ENCODE measurements at regions of chr2 and their contacts with region 1.

Region 1: GRCh38 chr2:37168217-37168981 is 11.6 kb upstream of the EIF2AK2 start:
- DNase-seq: peak; percentile 60 to 78
- ATAC-seq: peak; percentile 89 to 97
- H3K4me3 ChIP-seq: no peak overlapping the region
- H3K27ac ChIP-seq: peak overlapping the region; percentile 44 to 75
- H3K4me1 ChIP-seq: peaks cover 10% of the 10 kb centered on the region; the same call in 1 of the 3 replicates
- CTCF ChIP-seq: peak; percentile 81
- EP300 ChIP-seq: no peak
- POLR2A ChIP-seq: no peak
- RAD21 ChIP-seq: peak; percentile 72 to 83

Region 2: DNA sequence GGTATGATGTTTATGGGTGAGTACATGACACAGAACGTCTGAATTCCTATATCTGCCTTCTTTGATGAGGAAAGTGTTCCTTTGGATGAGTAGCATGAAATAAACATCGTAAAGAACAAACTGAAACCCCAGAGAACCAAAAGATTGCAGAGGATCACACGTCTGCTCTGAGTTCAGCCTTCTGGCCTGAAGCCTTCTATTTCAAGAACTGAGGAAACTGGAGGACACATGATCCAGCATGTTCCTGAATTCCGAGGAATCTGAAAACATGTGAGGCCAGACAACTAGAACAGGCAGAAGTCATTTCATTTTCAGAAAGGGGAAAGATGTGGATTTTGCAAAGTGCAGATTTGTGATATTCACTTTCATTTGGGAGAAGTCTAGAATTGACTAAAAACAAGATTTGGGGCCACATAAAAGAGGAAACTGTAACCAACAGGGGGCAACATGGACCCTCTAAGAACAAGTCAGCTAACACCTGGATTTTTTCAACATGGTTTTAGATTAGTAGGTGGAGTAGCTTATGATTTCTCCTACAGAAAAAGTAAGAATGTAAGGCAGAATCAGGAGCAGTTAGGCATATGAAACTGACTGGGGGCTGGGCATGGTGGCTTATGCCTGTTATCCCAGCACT is 11.7 kb after region 1 on chr2:
- CTCF ChIA-PET with region 1: interaction called, 19 read pairs
- POLR2A ChIA-PET with region 1: no interaction called
- DNase-seq: no peak
- ATAC-seq: peak in 1 of 2 experiments; percentile 23; a peak in 1 of 6 replicates
- H3K4me3 ChIP-seq: no peak overlapping the region
- H3K27ac ChIP-seq: no peak overlapping the region
- H3K4me1 ChIP-seq: 0 out of 3 replicates have a peak, but pooled peaks cover 3% of the 10 kb centered on the region
- CTCF ChIP-seq: no peak
- EP300 ChIP-seq: no peak
- POLR2A ChIP-seq: no peak
- RAD21 ChIP-seq: peak in 1 of 2 experiments; percentile 30; a peak in 1 of 5 replicates

Region 3: GRCh38 chr2:37189452-37190153 is 21.2 kb after region 1 on chr2:
- CTCF ChIA-PET with region 1: interaction called, 25 read pairs
- POLR2A ChIA-PET with region 1: no interaction called
- DNase-seq: peak; percentile 64 to 85
- ATAC-seq: peak; percentile 91 to 94
- H3K4me3 ChIP-seq: no peak overlapping the region
- H3K27ac ChIP-seq: peak overlapping the region; percentile 41 to 66; a peak in 5 of 6 replicates
- H3K4me1 ChIP-seq: peaks cover 16% of the 10 kb centered on the region
- CTCF ChIP-seq: no peak
- EP300 ChIP-seq: no peak
- POLR2A ChIP-seq: no peak
- RAD21 ChIP-seq: no peak

Region 4: GRCh38 chr2:37402636-37403035 is 234.2 kb after region 1 on chr2:
- CTCF ChIA-PET with region 1: no interaction called
- POLR2A ChIA-PET with region 1: no interaction called
- DNase-seq: no peak
- ATAC-seq: no peak
- H3K4me3 ChIP-seq: no peak overlapping the region
- H3K27ac ChIP-seq: no peak overlapping the region
- H3K4me1 ChIP-seq: no peaks in the 10 kb centered on the region
- CTCF ChIP-seq: no peak
- EP300 ChIP-seq: no peak
- POLR2A ChIP-seq: no peak
- RAD21 ChIP-seq: no peak

Measured in A549 (cell line).